MCF 10A (cell line): ENCODE measurements at regions of chr1 and their contacts with region 1.

Region 1: DNA sequence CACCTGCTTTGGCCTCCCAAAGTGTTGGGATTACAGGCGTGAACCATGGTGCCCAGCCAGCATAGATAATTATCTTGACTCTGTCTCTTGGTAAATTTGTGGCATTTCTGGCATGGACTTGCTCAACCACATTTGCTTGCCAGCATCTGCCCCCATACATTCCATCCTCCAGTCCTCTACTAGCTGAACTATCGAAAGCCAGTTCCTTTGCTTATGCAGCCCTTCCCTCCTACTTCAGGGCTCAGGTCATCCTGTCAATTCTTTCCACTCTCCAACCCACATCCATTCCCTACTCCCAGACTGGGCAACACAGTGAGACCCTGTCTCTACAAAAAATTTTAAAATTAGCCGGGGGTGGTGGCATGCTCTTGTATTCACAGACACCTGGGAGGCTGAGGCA is 13.0 kb upstream of the UQCRHL start:
- DNase-seq: peak; percentile 59
- H3K4me3 Mint-ChIP-seq: no peak overlapping the region
- H3K27ac Mint-ChIP-seq: no peak overlapping the region
- H3K4me1 Mint-ChIP-seq: peaks cover 13% of the 10 kb centered on the region
- H3K27me3 Mint-ChIP-seq: no peaks in the 10 kb centered on the region
- CTCF ChIP-seq: no peak

Region 2: GRCh38 chr1:15797614-15798390 is 22.7 kb before region 1 on chr1:
- CTCF ChIA-PET with region 1: interaction called, 31 read pairs
- POLR2A ChIA-PET with region 1: interaction called, 10 read pairs
- intact Hi-C with region 1: no loop called
- DNase-seq: peak; percentile 84
- H3K4me3 Mint-ChIP-seq: peak overlapping the region; percentile 61
- H3K27ac Mint-ChIP-seq: peak overlapping the region; percentile 93
- H3K4me1 Mint-ChIP-seq: peaks cover 68% of the 10 kb centered on the region
- H3K27me3 Mint-ChIP-seq: no peaks in the 10 kb centered on the region
- CTCF ChIP-seq: no peak

Region 3: GRCh38 chr1:15803354-15803753 is 17.1 kb before region 1 on chr1:
- CTCF ChIA-PET with region 1: interaction called, 31 read pairs
- POLR2A ChIA-PET with region 1: interaction called, 10 read pairs
- intact Hi-C with region 1: no loop called
- DNase-seq: peak; percentile 54
- H3K4me3 Mint-ChIP-seq: no peak overlapping the region
- H3K27ac Mint-ChIP-seq: no peak overlapping the region
- H3K4me1 Mint-ChIP-seq: peaks cover 38% of the 10 kb centered on the region
- H3K27me3 Mint-ChIP-seq: no peaks in the 10 kb centered on the region
- CTCF ChIP-seq: peak; percentile 36

Region 4: DNA sequence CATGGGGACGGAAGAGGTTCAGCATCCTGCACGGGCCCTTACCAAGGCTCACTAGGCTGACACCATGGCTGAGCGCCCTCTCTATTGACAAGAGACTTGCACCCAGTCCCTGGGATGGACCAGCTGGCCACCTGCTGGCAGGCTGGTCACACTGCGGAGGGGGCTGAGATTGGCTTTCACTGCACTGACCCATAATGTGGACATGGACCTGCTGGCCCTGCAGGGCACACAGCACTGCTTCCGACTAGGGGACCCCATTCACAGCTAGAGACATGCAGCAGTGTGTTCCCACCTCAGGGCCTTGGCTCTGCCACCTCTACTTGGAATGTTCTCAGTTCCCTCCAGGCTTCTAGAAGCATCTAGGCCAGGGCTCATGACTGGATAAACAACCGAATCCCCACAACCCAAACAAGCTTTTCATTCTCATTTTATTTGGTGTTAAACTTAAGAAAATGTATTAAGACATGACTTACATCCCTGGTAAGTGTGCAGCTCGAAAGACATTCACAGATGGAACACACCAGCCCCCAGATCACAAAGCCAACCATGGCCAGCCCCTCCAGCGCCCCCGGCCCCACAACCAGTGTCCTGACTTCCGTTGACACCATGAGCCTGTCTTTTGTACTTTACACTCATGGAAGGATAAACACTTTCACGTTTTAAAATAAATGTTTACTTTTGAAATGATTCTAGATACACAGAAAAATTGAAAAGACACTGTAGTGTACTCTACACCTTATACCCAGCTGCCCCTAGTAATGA is 174.3 kb after region 1 on chr1:
- CTCF ChIA-PET with region 1: interaction called, 13 read pairs
- POLR2A ChIA-PET with region 1: interaction called, 5 read pairs
- intact Hi-C with region 1: no loop called
- DNase-seq: peak; percentile 77
- H3K4me3 Mint-ChIP-seq: no peak overlapping the region
- H3K27ac Mint-ChIP-seq: no peak overlapping the region
- H3K4me1 Mint-ChIP-seq: no peaks in the 10 kb centered on the region
- H3K27me3 Mint-ChIP-seq: no peaks in the 10 kb centered on the region
- CTCF ChIP-seq: peak; percentile 81

Region 5: GRCh38 chr1:16009030-16009709 is 188.7 kb after region 1 on chr1:
- CTCF ChIA-PET with region 1: interaction called, 7 read pairs
- POLR2A ChIA-PET with region 1: no interaction called
- intact Hi-C with region 1: loop called (anchors 1 kb)
- DNase-seq: peak; percentile 81
- H3K4me3 Mint-ChIP-seq: no peak overlapping the region
- H3K27ac Mint-ChIP-seq: no peak overlapping the region
- H3K4me1 Mint-ChIP-seq: peaks cover 15% of the 10 kb centered on the region
- H3K27me3 Mint-ChIP-seq: no peaks in the 10 kb centered on the region
- CTCF ChIP-seq: peak; percentile 97